ENCODE measurements at regions of chr9 and their contacts with region 1.

Region 1: GRCh38 chr9:35611230-35611797 is 6.3 kb downstream of the TESK1 start:
- DNase-seq: peak; percentile 63
- ATAC-seq: peak; percentile 87
- H3K4me3 Mint-ChIP-seq: no peak overlapping the region
- H3K27ac Mint-ChIP-seq: no peak overlapping the region
- H3K4me1 Mint-ChIP-seq: peaks cover 9% of the 10 kb centered on the region
- H3K27me3 Mint-ChIP-seq: peaks cover 36% of the 10 kb centered on the region
- CTCF ChIP-seq: peak; percentile 52

Region 2: GRCh38 chr9:35538361-35539234 is 72.7 kb before region 1 on chr9:
- CTCF ChIA-PET with region 1: no interaction called
- POLR2A ChIA-PET with region 1: no interaction called
- DNase-seq: peak; percentile 64
- ATAC-seq: peak; percentile 92
- H3K4me3 Mint-ChIP-seq: peak overlapping the region; percentile 70
- H3K27ac Mint-ChIP-seq: peak overlapping the region; percentile 48
- H3K4me1 Mint-ChIP-seq: peaks cover 26% of the 10 kb centered on the region
- H3K27me3 Mint-ChIP-seq: no peaks in the 10 kb centered on the region
- CTCF ChIP-seq: no peak

Region 3: GRCh38 chr9:35628389-35628991 is 17.2 kb after region 1 on chr9:
- CTCF ChIA-PET with region 1: interaction called, 14 read pairs
- POLR2A ChIA-PET with region 1: no interaction called
- DNase-seq: no peak
- ATAC-seq: no peak
- H3K4me3 Mint-ChIP-seq: no peak overlapping the region
- H3K27ac Mint-ChIP-seq: no peak overlapping the region
- H3K4me1 Mint-ChIP-seq: no peaks in the 10 kb centered on the region
- H3K27me3 Mint-ChIP-seq: peaks cover 4% of the 10 kb centered on the region
- CTCF ChIP-seq: no peak

Region 4: DNA sequence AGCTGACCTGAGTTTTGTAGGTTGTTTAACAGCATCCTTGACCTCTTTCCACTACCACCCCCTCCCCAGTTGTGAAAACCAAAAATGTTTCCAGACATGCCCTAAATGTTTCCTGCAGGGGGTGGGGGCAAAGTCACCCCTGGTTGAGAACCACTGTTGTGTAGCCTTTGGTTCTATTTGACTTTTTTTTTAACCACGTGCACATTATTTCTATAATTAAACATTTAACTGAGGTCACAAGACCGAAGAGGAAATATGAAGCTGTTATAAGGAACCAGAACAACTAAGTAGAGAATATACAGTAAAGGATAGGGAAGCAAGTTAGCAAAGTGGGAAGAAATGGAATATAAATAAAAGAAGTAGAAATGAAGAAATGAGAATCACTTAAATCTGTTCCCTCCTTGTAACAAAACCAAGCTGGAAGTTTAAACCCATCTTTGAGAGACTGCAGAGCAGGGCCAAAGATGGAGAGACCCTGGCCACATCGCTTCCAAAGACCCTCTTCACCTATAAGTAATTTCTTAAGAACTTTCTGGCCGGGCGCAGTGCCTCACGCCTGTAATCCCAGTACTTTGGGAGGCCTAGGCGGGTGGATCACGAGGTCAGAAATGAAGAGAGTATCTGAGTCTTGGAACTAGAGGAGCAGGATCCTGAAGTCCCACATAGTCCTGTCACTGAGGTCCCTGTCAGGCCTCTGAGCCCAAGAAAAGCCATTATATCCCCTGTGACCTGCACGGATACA is 25.0 kb after region 1 on chr9:
- CTCF ChIA-PET with region 1: interaction called, 14 read pairs
- POLR2A ChIA-PET with region 1: no interaction called
- DNase-seq: no peak
- ATAC-seq: no peak
- H3K4me3 Mint-ChIP-seq: no peak overlapping the region
- H3K27ac Mint-ChIP-seq: no peak overlapping the region
- H3K4me1 Mint-ChIP-seq: no peaks in the 10 kb centered on the region
- H3K27me3 Mint-ChIP-seq: peaks cover 11% of the 10 kb centered on the region
- CTCF ChIP-seq: no peak

Region 5: DNA sequence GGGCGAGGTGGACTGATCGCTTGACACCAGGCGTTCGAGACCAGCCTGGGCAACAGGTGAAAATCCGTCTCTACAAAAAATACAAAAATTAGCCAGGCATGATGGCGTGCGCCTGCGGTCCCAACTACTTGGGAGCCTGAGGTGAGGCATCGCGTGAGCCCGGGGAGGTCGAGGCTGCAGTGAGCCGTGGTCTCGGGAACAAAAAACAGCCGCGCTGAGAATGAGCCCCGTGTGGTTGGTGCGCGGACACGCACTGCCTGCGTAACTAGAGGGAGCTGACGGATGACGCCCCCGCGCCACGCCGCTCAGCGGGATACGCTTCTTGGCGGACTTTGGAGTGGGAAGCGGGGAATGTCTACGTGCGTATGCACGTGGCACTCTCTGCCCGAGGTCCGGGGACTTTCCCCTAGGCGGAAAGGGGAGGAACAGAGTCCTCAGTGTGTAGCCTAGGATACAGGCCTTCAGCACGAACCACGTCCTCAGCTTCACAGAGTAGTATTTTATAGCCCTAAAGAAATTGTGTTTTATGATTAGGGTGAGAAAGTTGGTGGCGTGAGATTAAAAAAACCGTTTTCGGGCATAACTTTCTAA is 46.3 kb after region 1 on chr9 and contains the start of gene RMRP:
- CTCF ChIA-PET with region 1: interaction called, 15 read pairs
- POLR2A ChIA-PET with region 1: no interaction called
- DNase-seq: peak; percentile 96
- ATAC-seq: peak; percentile 90
- H3K4me3 Mint-ChIP-seq: peak within 1 kb of the TSS; percentile 85
- H3K27ac Mint-ChIP-seq: peak within 1 kb of the TSS; percentile 100
- H3K4me1 Mint-ChIP-seq: peaks cover 20% of the 10 kb centered on the region
- H3K27me3 Mint-ChIP-seq: peaks cover 23% of the 10 kb centered on the region
- CTCF ChIP-seq: no peak
- total RNA-seq, gene RMRP: 23,577 to 25,958 TPM (median 25,042 TPM) in 3 replicates

Region 6: DNA sequence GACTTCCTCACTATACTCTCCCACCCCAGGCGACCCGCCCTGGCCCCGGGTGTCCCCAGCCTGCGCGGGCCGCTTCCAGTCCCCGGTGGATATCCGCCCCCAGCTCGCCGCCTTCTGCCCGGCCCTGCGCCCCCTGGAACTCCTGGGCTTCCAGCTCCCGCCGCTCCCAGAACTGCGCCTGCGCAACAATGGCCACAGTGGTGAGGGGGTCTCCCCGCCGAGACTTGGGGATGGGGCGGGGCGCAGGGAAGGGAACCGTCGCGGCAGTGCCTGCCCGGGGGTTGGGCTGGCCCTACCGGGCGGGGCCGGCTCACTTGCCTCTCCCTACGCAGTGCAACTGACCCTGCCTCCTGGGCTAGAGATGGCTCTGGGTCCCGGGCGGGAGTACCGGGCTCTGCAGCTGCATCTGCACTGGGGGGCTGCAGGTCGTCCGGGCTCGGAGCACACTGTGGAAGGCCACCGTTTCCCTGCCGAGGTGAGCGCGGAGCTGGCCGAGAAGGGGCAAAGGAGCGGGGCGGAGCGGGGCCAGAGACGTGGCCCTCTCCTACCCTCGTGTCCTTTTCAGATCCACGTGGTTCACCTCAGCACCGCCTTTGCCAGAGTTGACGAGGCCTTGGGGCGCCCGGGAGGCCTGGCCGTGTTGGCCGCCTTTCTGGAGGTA is 64.5 kb after region 1 on chr9:
- CTCF ChIA-PET with region 1: interaction called, 16 read pairs
- POLR2A ChIA-PET with region 1: no interaction called
- DNase-seq: peak; percentile 95
- ATAC-seq: peak; percentile 92
- H3K4me3 Mint-ChIP-seq: peak overlapping the region; percentile 69
- H3K27ac Mint-ChIP-seq: no peak overlapping the region
- H3K4me1 Mint-ChIP-seq: peaks cover 15% of the 10 kb centered on the region
- H3K27me3 Mint-ChIP-seq: peaks cover 30% of the 10 kb centered on the region
- CTCF ChIP-seq: no peak

Measured in WTC11 (cell line).